ENCODE measurements at regions of chr3 and their contacts with region 1.

Region 1: GRCh38 chr3:119401503-119402372 is 61.7 kb downstream of the TMEM39A start:
- DNase-seq: peak; percentile 83
- H3K4me3 ChIP-seq: peak overlapping the region; percentile 49
- H3K27ac ChIP-seq: peak overlapping the region; percentile 90
- H3K4me1 ChIP-seq: peaks cover 56% of the 10 kb centered on the region
- CTCF ChIP-seq: no peak

Region 2: GRCh38 chr3:119125742-119126503 is 275.8 kb before region 1 on chr3:
- CTCF ChIA-PET with region 1: no interaction called
- POLR2A ChIA-PET with region 1: no interaction called
- intact Hi-C with region 1: no loop called
- DNase-seq: no peak
- H3K4me3 ChIP-seq: no peak overlapping the region
- H3K27ac ChIP-seq: no peak overlapping the region
- H3K4me1 ChIP-seq: no peaks in the 10 kb centered on the region
- CTCF ChIP-seq: no peak

Region 3: GRCh38 chr3:119293871-119294695 is 107.7 kb before region 1 on chr3 and contains the start of gene ARHGAP31:
- CTCF ChIA-PET with region 1: interaction called, 3 read pairs
- POLR2A ChIA-PET with region 1: interaction called, 3 read pairs
- intact Hi-C with region 1: loop called (anchors 5 kb)
- DNase-seq: peak; percentile 70
- H3K4me3 ChIP-seq: peak within 1 kb of the TSS; percentile 71
- H3K27ac ChIP-seq: peak within 1 kb of the TSS; percentile 44
- H3K4me1 ChIP-seq: peaks cover 37% of the 10 kb centered on the region
- CTCF ChIP-seq: no peak
- total RNA-seq, gene ARHGAP31: 4.1 TPM in 2 replicates

Region 4: DNA sequence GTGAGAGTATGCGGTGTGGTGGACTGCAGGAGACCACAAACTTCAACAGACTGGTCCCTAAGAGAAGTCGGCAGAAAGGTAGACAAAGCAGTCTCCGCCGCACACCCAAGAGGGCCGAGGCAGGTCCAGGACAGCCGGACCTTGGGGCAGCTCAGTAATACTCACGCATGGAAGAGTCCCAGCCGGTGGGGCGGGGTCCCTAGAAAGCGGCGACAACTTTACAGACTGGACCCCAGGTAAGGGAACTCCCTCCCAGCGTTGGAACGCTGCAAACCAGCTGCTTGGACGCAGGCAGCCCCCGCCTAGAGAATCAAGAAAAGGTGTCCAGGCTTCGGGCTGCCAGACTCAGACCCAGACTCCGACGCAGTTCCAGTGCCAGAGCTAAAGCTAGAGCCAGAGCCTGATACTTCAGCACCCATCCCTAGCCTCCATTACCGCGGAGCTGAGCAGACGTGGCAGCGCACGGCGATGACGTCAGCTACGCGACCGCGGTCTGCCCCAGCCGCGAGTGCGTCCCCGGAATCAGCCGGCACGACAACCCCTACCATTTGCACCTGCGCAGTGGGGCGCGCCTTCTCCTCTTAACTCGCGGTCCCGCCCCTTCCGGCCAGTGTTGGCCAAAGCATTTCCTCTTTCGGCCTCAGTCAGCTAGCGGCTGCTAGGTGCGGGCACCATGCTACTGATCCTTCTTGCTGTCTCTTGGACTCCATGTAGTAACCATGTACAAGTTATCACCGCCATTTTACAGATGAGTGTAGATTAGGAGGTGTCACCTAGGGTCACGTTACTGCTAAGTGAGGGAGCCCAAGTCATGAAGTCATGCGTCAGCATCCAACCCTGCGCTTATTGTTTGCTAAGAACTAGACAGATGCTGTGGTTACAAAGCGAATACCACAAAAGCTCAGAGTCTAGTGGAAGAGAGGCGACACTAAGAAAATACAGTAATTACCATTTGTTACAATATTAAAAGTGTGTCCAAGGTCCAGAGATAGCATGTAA is 61.7 kb after region 1 on chr3 and contains the start of gene TMEM39A:
- CTCF ChIA-PET with region 1: no interaction called
- POLR2A ChIA-PET with region 1: interaction called, 5 read pairs
- intact Hi-C with region 1: loop called (anchors 5 kb)
- DNase-seq: peak; percentile 99
- H3K4me3 ChIP-seq: peak within 1 kb of the TSS; percentile 91
- H3K27ac ChIP-seq: peak within 1 kb of the TSS; percentile 66
- H3K4me1 ChIP-seq: peaks cover 23% of the 10 kb centered on the region
- CTCF ChIP-seq: no peak
- total RNA-seq, gene TMEM39A: 31.6 and 35.3 TPM in 2 replicates

Region 5: GRCh38 chr3:119481079-119481478 is 79.3 kb after region 1 on chr3:
- CTCF ChIA-PET with region 1: no interaction called
- POLR2A ChIA-PET with region 1: no interaction called
- intact Hi-C with region 1: no loop called
- DNase-seq: no peak
- H3K4me3 ChIP-seq: no peak overlapping the region
- H3K27ac ChIP-seq: no peak overlapping the region
- H3K4me1 ChIP-seq: no peaks in the 10 kb centered on the region
- CTCF ChIP-seq: no peak

Measured in OCI-LY7 (cell line).